ENCODE measurements at regions of chr5 and their contacts with region 1.

Region 1: GRCh38 chr5:73519531-73520283 is 21.5 kb downstream of the BTF3 start:
- DNase-seq: peak in 1 of 2 donors; percentile 64
- H3K4me3 ChIP-seq: no peak overlapping the region
- H3K27ac ChIP-seq: no peak overlapping the region
- H3K4me1 ChIP-seq: peaks cover 0 to 31% (median 3%) of the 10 kb centered on the region in 4 donors
- H3K27me3 ChIP-seq: no peaks in the 10 kb centered on the region
- CTCF ChIP-seq: peak; percentile 72 to 74

Region 2: GRCh38 chr5:72988769-72989168 is 530.9 kb before region 1 on chr5:
- intact Hi-C with region 1: no loop called
- DNase-seq: no peak
- H3K4me3 ChIP-seq: no peak overlapping the region
- H3K27ac ChIP-seq: no peak overlapping the region
- H3K4me1 ChIP-seq: no peaks in the 10 kb centered on the region
- H3K27me3 ChIP-seq: no peaks in the 10 kb centered on the region
- CTCF ChIP-seq: no peak

Region 3: GRCh38 chr5:73540192-73540591 is 20.5 kb after region 1 on chr5:
- intact Hi-C with region 1: loop called (anchors 2 kb)
- DNase-seq: no peak
- H3K4me3 ChIP-seq: no peak overlapping the region
- H3K27ac ChIP-seq: no peak overlapping the region
- H3K4me1 ChIP-seq: peaks cover 0 to 22% (median 11%) of the 10 kb centered on the region in 4 donors
- H3K27me3 ChIP-seq: no peaks in the 10 kb centered on the region
- CTCF ChIP-seq: no peak

Region 4: GRCh38 chr5:73709536-73710129 is 189.9 kb after region 1 on chr5:
- intact Hi-C with region 1: no loop called
- DNase-seq: no peak
- H3K4me3 ChIP-seq: no peak overlapping the region
- H3K27ac ChIP-seq: no peak overlapping the region
- H3K4me1 ChIP-seq: no peaks in the 10 kb centered on the region
- H3K27me3 ChIP-seq: no peaks in the 10 kb centered on the region
- CTCF ChIP-seq: no peak